SK-N-SH (cell line): ENCODE measurements at regions of chr16 and their contacts with region 1.

Region 1: GRCh38 chr16:64151990-64152767 is 969.7 kb downstream of the CDH11 start:
- DNase-seq: peak; percentile 58
- H3K4me3 ChIP-seq: no peak overlapping the region
- H3K27ac ChIP-seq: peak overlapping the region; percentile 33 to 94; a peak in 3 of 4 replicates
- H3K4me1 ChIP-seq: peaks cover 15 to 16% of the 10 kb centered on the region in 2 experiments; a peak in 3 of 4 replicates
- H3K27me3 ChIP-seq: no peaks in the 10 kb centered on the region
- CTCF ChIP-seq: peak; percentile 16; the same call in 1 of the 2 replicates
- EP300 ChIP-seq: peak; percentile 44 to 98; a peak in 3 of 4 replicates
- RAD21 ChIP-seq: peak; percentile 42; the same call in 1 of the 2 replicates

Region 2: DNA sequence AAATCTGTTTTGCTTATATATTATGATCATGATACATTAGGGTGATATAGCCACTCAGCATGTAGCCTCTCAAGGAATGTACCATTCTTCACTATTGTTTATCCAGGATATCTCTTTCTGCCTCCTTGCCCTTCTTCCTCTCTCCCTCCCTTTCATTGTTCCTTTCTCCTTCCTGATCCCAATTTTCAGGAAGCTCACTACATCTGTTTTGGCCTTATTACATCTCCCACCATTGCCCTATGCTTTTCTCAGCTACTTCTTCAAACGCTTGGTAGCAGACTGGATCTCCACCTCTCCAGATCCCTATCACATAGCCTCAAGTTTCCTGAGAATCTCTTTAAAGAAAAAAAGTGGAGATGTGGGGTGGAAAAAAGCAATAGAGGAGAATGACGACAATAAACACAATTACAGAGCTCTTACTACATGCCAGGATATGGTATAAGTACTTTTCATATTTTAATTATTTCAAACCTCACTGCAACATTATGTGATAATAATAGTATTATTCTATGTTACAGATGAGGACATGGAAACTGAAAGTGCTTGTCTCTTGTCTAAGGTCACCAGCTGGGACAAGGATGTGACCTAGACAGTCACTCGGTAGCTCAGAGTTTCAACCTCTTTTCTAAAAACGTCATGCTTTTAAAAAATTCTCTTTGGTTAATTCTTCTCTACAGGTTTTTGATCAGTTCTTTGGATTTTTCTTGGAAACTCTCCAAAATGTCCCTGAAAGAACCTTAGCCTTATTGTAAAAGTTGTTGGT is 10.6 kb after region 1 on chr16:
- CTCF ChIA-PET with region 1: interaction called, 12 read pairs
- POLR2A ChIA-PET with region 1: no interaction called
- DNase-seq: no peak
- H3K4me3 ChIP-seq: no peak overlapping the region
- H3K27ac ChIP-seq: no peak overlapping the region
- H3K4me1 ChIP-seq: peaks cover 0 to 6% of the 10 kb centered on the region in 2 experiments; a peak in 3 of 4 replicates
- H3K27me3 ChIP-seq: no peaks in the 10 kb centered on the region
- CTCF ChIP-seq: no peak
- EP300 ChIP-seq: no peak
- RAD21 ChIP-seq: no peak

Region 3: GRCh38 chr16:64180136-64180900 is 28.1 kb after region 1 on chr16:
- CTCF ChIA-PET with region 1: no interaction called
- POLR2A ChIA-PET with region 1: no interaction called
- DNase-seq: no peak
- H3K4me3 ChIP-seq: no peak overlapping the region
- H3K27ac ChIP-seq: no peak overlapping the region
- H3K4me1 ChIP-seq: no peaks in the 10 kb centered on the region
- H3K27me3 ChIP-seq: no peaks in the 10 kb centered on the region
- CTCF ChIP-seq: no peak
- EP300 ChIP-seq: no peak
- RAD21 ChIP-seq: no peak